Activated T-helper 1 cell treated with anti-CD3 and anti-CD28 coated beads, Interleukin-12 subunit alpha, Interleukin-12 subunit beta, Interleukin-2, Interleukin-4 antibody, amounts not matched to agents 30 ng/mL and 10 ng/mL and 1 ng/mL, durations not matched to agents 14 hours and 24 hours and 36 hours (primary cell): ENCODE measurements at regions of chr7 and their contacts with region 1.

Region 1: GRCh38 chr7:2354186-2354938 is at the start of gene EIF3B:
- DNase-seq: peak; percentile 85
- H3K4me3 Mint-ChIP-seq: peak within 1 kb of the TSS; percentile 92
- H3K27ac Mint-ChIP-seq: peak within 1 kb of the TSS; percentile 100
- H3K4me1 Mint-ChIP-seq: peaks cover 21% of the 10 kb centered on the region
- H3K27me3 Mint-ChIP-seq: no peaks in the 10 kb centered on the region
- total RNA-seq, gene EIF3B: 269 and 270 TPM in 2 replicates

Region 2: GRCh38 chr7:1459522-1459892 is 894.9 kb before region 1 on chr7:
- intact Hi-C with region 1: loop called (anchors 1 kb)
- DNase-seq: peak; percentile 96
- H3K4me3 Mint-ChIP-seq: peak overlapping the region; percentile 72
- H3K27ac Mint-ChIP-seq: no peak overlapping the region
- H3K4me1 Mint-ChIP-seq: no peaks in the 10 kb centered on the region
- H3K27me3 Mint-ChIP-seq: peaks cover 4% of the 10 kb centered on the region

Region 3: GRCh38 chr7:1664711-1665548 is 689.4 kb before region 1 on chr7:
- intact Hi-C with region 1: loop called (anchors 2 kb)
- DNase-seq: peak; percentile 16
- H3K4me3 Mint-ChIP-seq: no peak overlapping the region
- H3K27ac Mint-ChIP-seq: no peak overlapping the region
- H3K4me1 Mint-ChIP-seq: no peaks in the 10 kb centered on the region
- H3K27me3 Mint-ChIP-seq: peaks cover 41% of the 10 kb centered on the region

Region 4: GRCh38 chr7:2104107-2104710 is 250.2 kb before region 1 on chr7:
- intact Hi-C with region 1: loop called (anchors 5 kb)
- DNase-seq: peak; percentile 41
- H3K4me3 Mint-ChIP-seq: no peak overlapping the region
- H3K27ac Mint-ChIP-seq: peak overlapping the region; percentile 52
- H3K4me1 Mint-ChIP-seq: peaks cover 10% of the 10 kb centered on the region
- H3K27me3 Mint-ChIP-seq: peaks cover 1% of the 10 kb centered on the region

Region 5: GRCh38 chr7:2314209-2314955 is 40.0 kb before region 1 on chr7 and contains the start of gene SNX8:
- intact Hi-C with region 1: loop called (anchors 1 kb)
- DNase-seq: peak; percentile 93
- H3K4me3 Mint-ChIP-seq: peak within 1 kb of the TSS; percentile 91
- H3K27ac Mint-ChIP-seq: peak within 1 kb of the TSS; percentile 87
- H3K4me1 Mint-ChIP-seq: peaks cover 8% of the 10 kb centered on the region
- H3K27me3 Mint-ChIP-seq: no peaks in the 10 kb centered on the region
- total RNA-seq, gene SNX8: 40.8 and 41.8 TPM in 2 replicates

Region 6: DNA sequence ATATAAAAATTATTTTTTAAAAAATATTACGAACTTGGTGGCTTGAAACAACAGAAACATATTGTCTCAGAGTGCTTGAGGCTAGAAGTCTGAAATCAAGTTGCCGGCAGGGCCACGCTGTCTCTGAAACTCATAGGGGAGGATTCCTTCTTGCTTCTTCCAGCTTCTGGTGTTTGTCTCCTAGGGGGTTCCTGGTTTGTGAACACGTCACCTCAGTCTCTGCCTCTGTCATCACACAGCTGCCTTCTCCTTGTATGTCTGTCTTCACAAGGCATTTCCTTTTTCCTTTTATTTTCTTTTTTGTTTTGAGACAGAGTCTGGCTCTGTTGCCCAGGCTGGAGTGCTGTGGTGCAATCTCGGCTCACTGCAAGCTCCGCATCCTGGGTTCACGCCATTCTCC is 27.4 kb before region 1 on chr7:
- intact Hi-C with region 1: no loop called
- DNase-seq: no peak
- H3K4me3 Mint-ChIP-seq: no peak overlapping the region
- H3K27ac Mint-ChIP-seq: no peak overlapping the region
- H3K4me1 Mint-ChIP-seq: no peaks in the 10 kb centered on the region
- H3K27me3 Mint-ChIP-seq: no peaks in the 10 kb centered on the region

Region 7: GRCh38 chr7:2373124-2373556 is 18.8 kb after region 1 on chr7:
- intact Hi-C with region 1: no loop called
- DNase-seq: no peak
- H3K4me3 Mint-ChIP-seq: no peak overlapping the region
- H3K27ac Mint-ChIP-seq: no peak overlapping the region
- H3K4me1 Mint-ChIP-seq: peaks cover 5% of the 10 kb centered on the region
- H3K27me3 Mint-ChIP-seq: no peaks in the 10 kb centered on the region